WTC11 (cell line): ENCODE measurements at regions of chr1 and their contacts with region 1.

Region 1: DNA sequence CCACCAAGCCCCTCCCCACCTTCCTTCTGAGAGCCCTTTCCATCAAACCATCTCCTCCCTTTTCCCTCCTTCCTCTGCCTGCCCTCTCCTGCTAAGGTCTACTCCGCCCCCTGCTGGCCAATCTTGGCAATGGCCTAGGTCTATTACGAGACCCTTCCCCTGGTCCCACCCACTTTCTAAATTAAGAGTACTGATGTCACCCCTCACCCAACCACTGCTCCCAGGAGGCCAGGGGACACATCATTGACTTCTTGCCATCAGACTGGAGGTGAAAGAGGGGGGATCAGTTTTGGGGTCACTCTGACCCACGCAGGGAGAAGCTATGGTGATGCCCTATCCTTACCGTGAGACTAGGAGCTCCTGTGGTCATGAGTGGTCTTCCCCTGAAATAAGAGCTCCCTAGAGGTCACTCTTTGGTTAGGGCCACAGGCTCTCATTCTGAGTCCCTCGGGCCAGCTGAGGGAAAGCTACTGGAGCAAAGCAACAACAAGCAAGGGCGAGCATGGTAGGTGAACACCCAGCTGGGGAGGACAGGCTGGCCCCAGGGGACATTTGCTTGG is 34.6 kb upstream of the S100A7 start:
- DNase-seq: peak; percentile 99
- ATAC-seq: peak; percentile 96
- H3K4me3 Mint-ChIP-seq: no peak overlapping the region
- H3K27ac Mint-ChIP-seq: peak overlapping the region; percentile 56; the same call in 1 of the 2 replicates
- H3K4me1 Mint-ChIP-seq: peaks cover 23% of the 10 kb centered on the region
- H3K27me3 Mint-ChIP-seq: no peaks in the 10 kb centered on the region; the same call in 1 of the 2 replicates
- CTCF ChIP-seq: peak; percentile 95

Region 2: DNA sequence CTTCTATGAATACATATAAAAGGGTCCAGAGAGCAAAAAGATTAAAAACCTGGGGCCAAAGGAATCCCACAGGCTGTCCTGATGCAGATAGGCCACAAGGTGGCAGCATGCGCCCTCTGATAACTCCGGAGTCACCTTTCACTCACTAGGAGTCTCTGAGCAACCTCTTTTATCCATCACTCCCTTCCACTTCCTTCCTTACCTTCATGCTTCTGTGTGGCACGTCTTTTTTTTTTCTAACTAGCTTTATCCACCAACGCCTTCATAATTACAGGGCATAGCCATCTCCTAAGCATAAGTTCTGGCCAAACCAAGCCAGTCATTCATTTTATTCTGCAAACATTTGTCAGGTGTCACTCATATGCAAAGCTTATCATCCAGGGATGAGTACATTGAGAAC is 142.5 kb before region 1 on chr1:
- CTCF ChIA-PET with region 1: interaction called, 169 read pairs
- POLR2A ChIA-PET with region 1: interaction called, 3 read pairs
- DNase-seq: peak; percentile 68
- ATAC-seq: peak; percentile 29
- H3K4me3 Mint-ChIP-seq: no peak overlapping the region
- H3K27ac Mint-ChIP-seq: no peak overlapping the region
- H3K4me1 Mint-ChIP-seq: peaks cover 6% of the 10 kb centered on the region; the same call in 1 of the 2 replicates
- H3K27me3 Mint-ChIP-seq: peaks cover 18% of the 10 kb centered on the region; the same call in 1 of the 2 replicates
- CTCF ChIP-seq: peak; percentile 76

Region 3: GRCh38 chr1:153380711-153381110 is 114.3 kb before region 1 on chr1:
- CTCF ChIA-PET with region 1: no interaction called
- POLR2A ChIA-PET with region 1: no interaction called
- DNase-seq: no peak
- ATAC-seq: no peak
- H3K4me3 Mint-ChIP-seq: no peak overlapping the region
- H3K27ac Mint-ChIP-seq: no peak overlapping the region
- H3K4me1 Mint-ChIP-seq: no peaks in the 10 kb centered on the region
- H3K27me3 Mint-ChIP-seq: peaks cover 17% of the 10 kb centered on the region
- CTCF ChIP-seq: no peak

Region 4: GRCh38 chr1:153390938-153391710 is 103.9 kb before region 1 on chr1 and contains the start of gene S100A8:
- CTCF ChIA-PET with region 1: interaction called, 34 read pairs
- POLR2A ChIA-PET with region 1: no interaction called
- DNase-seq: no peak
- ATAC-seq: no peak
- H3K4me3 Mint-ChIP-seq: no peak within 1 kb of the TSS
- H3K27ac Mint-ChIP-seq: no peak within 1 kb of the TSS
- H3K4me1 Mint-ChIP-seq: no peaks in the 10 kb centered on the region
- H3K27me3 Mint-ChIP-seq: peaks cover 4% of the 10 kb centered on the region
- CTCF ChIP-seq: no peak
- total RNA-seq, gene S100A8: 1.4 TPM in 1 of 3 replicates, not detected in the others

Region 5: DNA sequence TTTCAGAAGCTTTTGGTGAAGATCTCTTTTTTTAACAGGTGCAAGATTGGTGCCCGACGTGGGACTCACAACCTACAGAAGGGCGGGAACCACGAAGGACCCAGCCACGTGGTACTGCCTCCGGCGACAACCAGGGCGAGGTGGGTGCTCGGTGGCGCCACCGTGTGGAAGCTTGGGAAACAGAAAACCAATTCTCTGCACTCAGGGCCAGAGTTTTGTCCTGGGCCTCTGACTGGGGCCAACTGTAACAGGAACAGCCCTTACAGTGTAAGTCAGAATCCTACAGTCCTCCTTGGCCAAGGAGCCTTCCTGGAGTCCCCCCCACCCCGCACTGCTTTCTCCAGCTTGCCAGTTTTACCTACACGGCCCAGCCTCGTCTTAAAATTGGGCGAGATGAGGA is 90.3 kb before region 1 on chr1:
- CTCF ChIA-PET with region 1: interaction called, 45 read pairs
- POLR2A ChIA-PET with region 1: interaction called, 5 read pairs
- DNase-seq: peak; percentile 81
- ATAC-seq: peak; percentile 68
- H3K4me3 Mint-ChIP-seq: no peak overlapping the region
- H3K27ac Mint-ChIP-seq: no peak overlapping the region
- H3K4me1 Mint-ChIP-seq: peaks cover 18% of the 10 kb centered on the region
- H3K27me3 Mint-ChIP-seq: peaks cover 40% of the 10 kb centered on the region
- CTCF ChIP-seq: peak; percentile 79

Region 6: DNA sequence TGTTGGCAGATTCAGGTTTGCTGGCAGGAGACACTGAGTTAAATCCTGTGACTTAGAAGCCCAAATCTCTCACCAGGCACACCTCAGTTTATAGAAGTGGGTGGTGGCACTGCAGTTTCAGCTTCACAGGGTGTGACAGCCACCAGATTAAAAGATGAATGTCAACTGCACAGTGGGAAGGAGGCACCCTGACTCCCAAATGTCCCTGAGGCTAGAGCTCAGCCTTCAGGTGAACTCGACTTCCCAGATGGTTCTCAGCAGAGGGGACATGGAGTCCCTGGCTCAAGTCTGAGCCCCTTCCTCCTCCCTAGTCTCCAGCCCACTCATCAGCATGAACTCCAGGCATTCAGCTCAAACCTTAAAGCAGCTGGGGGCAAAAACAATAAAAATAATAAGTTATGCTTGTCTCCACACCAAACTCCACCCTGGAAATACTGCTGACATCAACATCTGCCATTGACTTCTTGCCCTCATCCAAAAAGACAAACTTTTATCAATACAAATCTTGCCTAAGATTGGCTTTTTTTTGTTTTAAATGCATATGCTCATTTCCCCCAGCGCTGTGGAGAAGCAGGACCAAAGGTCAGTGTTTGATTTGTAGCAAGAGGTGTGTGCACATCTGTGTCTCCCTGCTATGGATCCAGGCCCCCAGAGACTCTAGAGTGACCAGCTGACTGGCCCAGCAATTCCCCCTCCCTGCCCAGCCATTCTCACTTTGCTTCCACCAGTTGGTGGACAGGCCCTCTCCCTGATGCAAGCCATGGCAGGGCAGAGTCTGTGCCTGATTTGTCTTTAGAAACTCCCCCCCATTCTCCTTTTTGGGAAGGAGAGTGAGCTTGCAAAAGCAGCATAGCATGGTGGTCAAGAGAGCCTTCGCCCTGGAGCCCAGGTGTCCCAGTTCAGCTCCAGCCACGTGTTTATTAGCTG is 16.1 kb before region 1 on chr1:
- CTCF ChIA-PET with region 1: interaction called, 45 read pairs
- POLR2A ChIA-PET with region 1: no interaction called
- DNase-seq: no peak
- ATAC-seq: no peak
- H3K4me3 Mint-ChIP-seq: no peak overlapping the region
- H3K27ac Mint-ChIP-seq: no peak overlapping the region
- H3K4me1 Mint-ChIP-seq: peaks cover 5% of the 10 kb centered on the region
- H3K27me3 Mint-ChIP-seq: no peaks in the 10 kb centered on the region; the same call in 1 of the 2 replicates
- CTCF ChIP-seq: no peak

Region 7: DNA sequence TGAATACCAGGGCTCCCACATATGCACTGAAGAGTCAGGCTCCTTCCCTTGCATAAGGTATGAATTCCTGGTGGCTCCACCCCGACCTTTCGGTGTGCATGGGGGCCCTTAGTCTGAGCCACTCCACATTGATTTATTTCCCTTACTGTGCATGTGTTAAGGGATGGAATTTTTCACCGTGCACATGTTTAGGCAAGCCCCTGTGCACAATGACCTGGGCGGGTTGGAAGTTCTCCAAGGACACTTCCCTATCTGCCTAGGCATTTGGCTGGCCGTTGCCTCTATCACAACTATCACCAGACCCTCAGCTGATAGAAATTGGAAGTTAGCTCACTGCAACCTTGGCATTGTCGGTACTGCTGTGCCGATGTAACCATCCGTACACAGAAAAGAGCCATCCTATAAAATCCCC is 31.1 kb after region 1 on chr1:
- CTCF ChIA-PET with region 1: interaction called, 13 read pairs
- POLR2A ChIA-PET with region 1: no interaction called
- DNase-seq: no peak
- ATAC-seq: no peak
- H3K4me3 Mint-ChIP-seq: no peak overlapping the region
- H3K27ac Mint-ChIP-seq: no peak overlapping the region
- H3K4me1 Mint-ChIP-seq: peaks cover 25% of the 10 kb centered on the region
- H3K27me3 Mint-ChIP-seq: peaks cover 10% of the 10 kb centered on the region
- CTCF ChIP-seq: no peak